Activated CD4-positive, alpha-beta memory T cell treated with anti-CD3 and anti-CD28 coated beads for 36 hours (primary cell): ENCODE measurements at regions of chr4 and their contacts with region 1.

Region 1: DNA sequence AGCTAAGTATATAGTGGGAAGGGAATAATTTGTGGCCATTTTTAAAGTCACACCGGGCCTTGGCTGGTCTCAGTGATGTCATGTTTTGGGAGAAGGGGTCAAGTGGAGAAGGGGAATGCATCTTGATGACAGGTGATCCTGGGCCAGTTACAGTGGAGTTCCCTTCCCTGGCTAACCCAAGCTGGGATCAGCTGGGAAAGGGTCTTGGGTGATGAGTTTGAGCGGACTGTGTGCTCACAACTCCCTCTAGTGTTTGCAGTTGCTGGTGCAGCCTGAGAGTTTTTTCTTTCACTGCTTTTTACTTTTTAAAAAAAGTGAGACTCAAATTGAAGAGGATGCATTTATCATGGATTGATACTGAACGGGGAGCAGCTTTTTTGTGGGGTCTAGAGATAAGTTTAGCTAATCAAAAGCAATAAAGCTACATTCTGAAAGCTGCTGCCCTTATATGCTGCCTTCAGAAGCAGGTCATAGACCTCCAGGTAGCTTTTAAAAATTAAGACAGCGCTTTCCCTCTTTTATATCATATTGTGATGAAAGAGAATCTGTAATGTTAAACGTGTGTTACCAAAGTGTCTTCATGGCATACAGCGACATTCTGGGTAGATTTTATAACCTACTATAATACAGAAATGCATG is 164.7 kb downstream of the DCLK2 start:
- DNase-seq: peak; percentile 28
- H3K4me3 Mint-ChIP-seq: no peak overlapping the region
- H3K27ac Mint-ChIP-seq: no peak overlapping the region
- H3K4me1 Mint-ChIP-seq: no peaks in the 10 kb centered on the region
- H3K27me3 Mint-ChIP-seq: peaks cover 11% of the 10 kb centered on the region

Region 2: DNA sequence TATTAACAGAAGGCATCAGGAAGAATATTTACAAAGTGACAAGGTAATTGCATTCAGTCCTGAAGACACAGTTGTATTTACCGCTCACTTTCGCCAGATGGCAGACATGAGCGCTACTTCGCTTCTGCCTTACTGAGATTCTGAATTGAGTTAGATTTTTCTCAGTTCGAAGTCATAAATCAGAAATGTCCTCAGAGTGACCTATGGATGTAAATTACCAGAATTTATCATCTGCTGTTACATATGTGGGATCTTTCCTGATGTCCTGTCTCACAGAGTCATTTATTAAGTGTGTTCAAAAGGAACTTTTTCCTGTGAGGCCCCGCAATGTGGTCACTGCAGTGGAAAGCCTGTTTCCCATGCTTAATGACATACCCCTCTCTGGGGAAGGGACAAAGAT is 262.0 kb before region 1 on chr4:
- CTCF ChIA-PET with region 1: interaction called, 11 read pairs
- POLR2A ChIA-PET with region 1: no interaction called
- intact Hi-C with region 1: loop called (anchors 1 kb)
- DNase-seq: peak; percentile 66
- H3K4me3 Mint-ChIP-seq: no peak overlapping the region
- H3K27ac Mint-ChIP-seq: no peak overlapping the region
- H3K4me1 Mint-ChIP-seq: peaks cover 10% of the 10 kb centered on the region
- H3K27me3 Mint-ChIP-seq: no peaks in the 10 kb centered on the region

Region 3: DNA sequence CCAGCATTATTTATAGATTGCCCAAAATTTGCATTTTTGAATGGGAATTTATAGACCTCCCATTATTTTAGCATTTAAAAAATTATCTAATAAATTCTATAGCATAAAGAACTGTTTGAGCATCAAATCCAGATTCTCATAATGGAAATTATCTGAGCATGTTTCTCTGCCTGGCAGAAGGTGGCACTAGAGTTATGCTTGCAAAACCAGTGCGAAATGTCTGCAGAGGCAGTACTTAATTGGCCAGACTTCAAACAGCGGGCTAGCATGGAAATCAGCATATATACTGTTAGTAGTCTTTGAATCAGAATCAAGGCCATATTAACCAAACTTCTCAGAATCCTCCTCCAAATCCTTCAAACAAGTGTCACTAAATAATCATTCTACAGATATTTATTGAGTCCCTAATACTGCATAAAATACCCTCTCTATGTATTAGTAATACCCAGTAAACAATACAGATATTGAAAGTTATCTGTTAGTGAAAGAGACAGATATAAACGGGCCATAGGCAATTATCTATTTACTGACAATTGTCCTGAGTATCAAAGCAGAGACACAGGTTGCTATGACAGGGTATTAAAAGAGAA is 243.4 kb before region 1 on chr4:
- CTCF ChIA-PET with region 1: interaction called, 4 read pairs
- POLR2A ChIA-PET with region 1: no interaction called
- intact Hi-C with region 1: loop called (anchors 1 kb)
- DNase-seq: no peak
- H3K4me3 Mint-ChIP-seq: no peak overlapping the region
- H3K27ac Mint-ChIP-seq: no peak overlapping the region
- H3K4me1 Mint-ChIP-seq: peaks cover 10% of the 10 kb centered on the region
- H3K27me3 Mint-ChIP-seq: no peaks in the 10 kb centered on the region

Region 4: GRCh38 chr4:150232029-150232428 is 10.9 kb before region 1 on chr4:
- CTCF ChIA-PET with region 1: interaction called, 10 read pairs
- POLR2A ChIA-PET with region 1: no interaction called
- intact Hi-C with region 1: no loop called
- DNase-seq: no peak
- H3K4me3 Mint-ChIP-seq: no peak overlapping the region
- H3K27ac Mint-ChIP-seq: no peak overlapping the region
- H3K4me1 Mint-ChIP-seq: no peaks in the 10 kb centered on the region
- H3K27me3 Mint-ChIP-seq: peaks cover 11% of the 10 kb centered on the region

Region 5: GRCh38 chr4:150593996-150594395 is 351.1 kb after region 1 on chr4:
- CTCF ChIA-PET with region 1: no interaction called
- POLR2A ChIA-PET with region 1: no interaction called
- intact Hi-C with region 1: no loop called
- DNase-seq: no peak
- H3K4me3 Mint-ChIP-seq: no peak overlapping the region
- H3K27ac Mint-ChIP-seq: no peak overlapping the region
- H3K4me1 Mint-ChIP-seq: no peaks in the 10 kb centered on the region
- H3K27me3 Mint-ChIP-seq: no peaks in the 10 kb centered on the region